ENCODE measurements at regions of chr10 and their contacts with region 1.

Region 1: DNA sequence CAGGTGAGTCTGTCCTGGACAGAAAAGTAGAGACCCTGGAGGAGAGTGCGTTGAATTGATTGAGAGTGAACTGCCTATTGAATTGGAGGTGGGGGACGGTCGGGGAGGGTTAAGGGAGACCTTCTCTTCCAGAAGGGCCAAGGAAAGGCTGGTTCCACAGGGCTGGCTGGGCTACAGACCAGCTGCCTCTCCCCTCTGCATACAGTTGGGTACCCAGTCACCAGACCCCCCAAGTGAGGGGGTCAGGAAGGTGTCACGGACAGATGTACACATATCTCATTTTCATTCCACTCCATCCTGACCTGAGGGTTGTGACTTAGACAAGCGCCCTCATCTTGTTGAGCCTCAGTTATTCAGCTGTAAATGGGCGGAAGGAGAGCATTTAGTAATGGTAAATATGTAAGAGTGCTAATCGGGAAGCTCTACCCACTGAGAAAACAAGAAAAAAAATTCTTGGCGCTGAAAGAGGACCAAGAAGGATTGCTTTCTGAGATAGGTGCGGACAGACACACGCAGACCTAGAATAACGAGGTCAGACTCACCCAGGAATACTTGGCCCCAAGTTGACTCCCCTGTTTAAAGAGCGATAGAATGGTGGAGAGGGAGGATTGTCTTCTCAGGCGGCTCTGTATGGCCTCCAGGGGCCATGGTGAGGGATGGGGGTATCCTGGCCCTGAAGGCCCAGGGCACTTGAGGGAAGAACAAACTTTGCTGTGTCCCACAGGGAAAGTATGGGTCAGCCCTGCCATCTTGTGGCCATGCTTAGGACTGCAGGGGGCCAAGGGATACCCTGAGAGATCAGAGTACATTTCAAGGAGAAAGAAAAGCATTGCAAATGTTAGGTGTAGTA is 7.2 kb upstream of the MBL2 start:
- DNase-seq: peak; percentile 68
- ATAC-seq: peak; percentile 87

Region 2: DNA sequence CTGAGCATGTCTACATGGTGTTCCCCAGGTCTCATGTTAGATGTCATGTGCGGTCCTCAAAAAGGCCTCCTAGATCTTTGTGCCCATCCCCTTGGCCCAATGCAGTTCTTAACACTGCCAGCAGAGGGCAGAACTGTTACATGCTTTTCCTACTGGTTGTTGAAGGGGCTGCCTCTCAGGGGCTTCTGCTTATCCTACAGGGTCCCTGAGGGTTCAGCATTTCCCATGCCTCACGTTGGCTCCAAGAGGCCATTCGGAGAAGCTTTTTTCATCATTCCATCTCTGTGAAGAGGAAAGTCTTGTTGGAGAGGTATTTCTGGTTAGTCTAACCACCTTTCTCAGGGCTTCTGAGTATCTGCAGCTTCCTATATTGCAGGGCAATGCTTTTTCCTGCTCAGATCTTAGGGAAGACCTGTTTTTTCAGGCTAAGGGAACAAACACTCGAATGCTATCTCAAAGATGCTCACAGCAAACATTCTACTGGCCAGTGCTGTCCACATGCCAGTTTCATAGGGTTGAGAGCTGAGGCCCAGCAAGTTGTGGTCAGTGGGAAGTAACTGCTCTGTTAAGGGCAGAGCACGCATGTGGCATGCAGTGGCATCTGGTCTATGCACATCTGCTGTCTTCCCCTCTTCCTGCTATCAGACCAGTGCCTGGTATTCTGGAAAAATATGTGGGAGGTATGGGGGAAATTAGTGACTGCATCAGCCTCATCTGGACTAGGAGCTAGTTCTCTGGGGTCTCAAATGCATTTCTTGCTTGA is 38.7 kb before region 1 on chr10:
- intact Hi-C with region 1: loop called (anchors 5 kb)
- DNase-seq: no peak
- ATAC-seq: peak; percentile 46

Region 3: DNA sequence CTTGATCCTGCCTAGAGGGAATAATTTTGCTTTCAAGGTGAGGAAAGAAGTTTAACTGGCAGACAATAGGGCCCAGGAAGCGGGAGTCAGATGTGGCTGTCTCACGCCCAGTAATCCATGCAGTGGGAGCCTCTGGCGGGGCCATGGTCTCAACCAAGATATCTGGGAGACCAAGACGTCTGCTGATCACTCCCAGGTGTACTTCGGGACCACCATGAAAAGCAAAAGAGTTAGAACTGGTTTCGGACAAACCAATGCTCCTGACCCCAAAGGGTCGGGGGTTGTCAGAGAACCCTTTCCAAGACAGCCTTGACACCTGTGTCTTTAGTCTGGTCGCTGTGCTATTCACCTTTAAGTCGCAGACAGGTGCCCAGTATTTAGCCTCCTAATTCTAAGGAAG is 249.7 kb after region 1 on chr10:
- intact Hi-C with region 1: no loop called
- DNase-seq: no peak
- ATAC-seq: no peak

Measured in Right ventricle myocardium superior (tissue), 1 donor.